ENCODE measurements at regions of chr5 and their contacts with region 1.

Region 1: DNA sequence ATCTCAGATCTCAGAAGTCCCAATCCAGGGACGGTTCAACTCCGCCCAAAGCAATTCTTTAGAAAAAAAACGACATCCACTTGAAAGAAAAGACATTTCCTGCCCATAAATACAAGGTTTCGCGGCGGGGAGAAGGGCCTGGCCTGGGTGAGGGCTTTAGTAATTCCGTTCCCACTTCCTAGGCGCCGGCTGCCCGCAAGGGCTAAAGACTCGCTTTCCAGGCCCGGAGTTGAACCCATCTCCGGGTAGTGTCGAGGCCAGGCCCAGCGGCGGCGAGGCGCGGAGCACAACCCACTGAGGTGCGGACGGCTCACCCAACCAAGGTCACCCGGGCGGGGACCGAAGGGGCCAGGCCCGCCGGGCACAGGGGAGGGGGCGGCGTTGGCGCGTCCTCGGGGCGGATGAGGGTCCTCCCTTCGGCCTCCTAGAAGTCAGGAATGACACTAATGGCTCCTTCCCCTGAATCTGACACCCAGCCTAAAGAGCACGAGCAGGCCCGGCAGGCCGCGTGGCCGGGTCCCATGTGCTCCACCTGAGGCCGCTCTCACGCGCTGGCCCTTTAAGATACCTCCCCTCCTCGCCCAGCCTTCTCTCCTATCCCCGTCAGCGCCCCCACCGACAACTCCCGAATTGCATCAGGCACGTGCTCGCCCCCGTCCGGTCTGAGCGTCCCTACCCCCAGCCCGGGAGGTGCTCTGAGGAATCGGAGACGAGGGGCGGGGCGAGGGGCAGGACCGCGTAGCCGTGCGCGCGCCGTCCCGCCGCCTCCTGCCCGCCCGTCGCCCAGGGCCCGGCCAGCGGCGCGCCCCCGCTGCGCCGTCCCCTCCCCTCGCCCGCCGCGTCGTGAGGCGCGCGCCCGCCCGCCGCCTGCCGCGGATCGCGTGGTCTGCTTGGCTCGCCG is 467 bp upstream of the LARP1 start:
- DNase-seq: peak; percentile 97 to 100 (median 98)

Region 2: DNA sequence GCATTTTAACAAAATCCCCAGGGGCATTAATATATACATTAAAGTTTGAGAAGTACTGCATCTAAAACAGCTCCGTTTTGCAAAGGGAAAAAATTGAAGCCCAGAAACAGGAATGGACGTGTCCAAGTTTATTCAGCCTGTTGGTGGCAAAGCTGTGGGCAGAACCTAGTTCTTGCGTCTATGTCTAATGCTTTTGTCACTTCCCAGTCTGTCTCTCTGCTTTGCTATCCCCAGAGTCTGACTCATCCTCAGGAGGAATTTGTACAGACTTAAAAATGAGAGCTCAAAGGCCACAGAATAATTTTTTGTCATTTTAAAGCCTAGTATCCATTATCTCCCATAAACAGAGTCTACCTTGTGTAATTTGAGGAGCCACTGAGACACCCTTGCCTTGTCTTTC is 1595.1 kb before region 1 on chr5:
- intact Hi-C with region 1: no loop called
- DNase-seq: no peak

Region 3: DNA sequence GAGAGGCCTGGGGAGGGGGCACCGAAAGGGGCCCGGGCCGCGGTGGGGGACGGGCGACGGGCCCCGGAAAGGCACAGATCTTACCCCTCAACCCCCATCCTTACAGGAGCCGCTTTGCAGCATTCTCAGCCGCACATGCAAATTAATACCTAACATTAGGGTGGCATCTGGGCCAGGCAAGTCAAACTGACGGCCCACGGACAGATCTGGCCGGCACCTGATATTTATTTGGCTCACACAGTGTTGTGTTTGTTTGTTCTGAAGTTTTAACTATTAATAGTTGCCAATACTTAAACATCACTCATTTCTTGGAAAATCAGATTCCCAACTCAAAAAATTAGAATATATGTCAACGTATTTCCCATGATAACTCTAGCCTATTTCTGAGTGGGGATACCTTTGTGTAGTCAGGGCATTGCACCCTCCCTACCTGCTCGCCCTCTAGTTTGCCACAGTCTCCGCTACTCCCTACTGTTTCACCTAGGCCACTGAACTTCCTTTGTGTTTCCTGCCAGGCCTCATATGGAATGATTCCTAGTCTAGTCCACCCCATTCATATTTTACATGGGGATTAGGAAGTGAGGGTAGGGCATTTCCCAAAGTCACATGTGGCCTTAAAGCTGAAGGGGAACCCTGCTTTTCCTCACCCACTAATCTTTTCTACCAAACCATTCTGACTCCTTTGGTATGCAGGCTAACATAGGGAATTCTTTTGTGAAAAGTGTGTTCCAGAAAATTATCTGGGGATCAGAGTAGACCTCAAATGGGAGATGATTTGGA is 71.4 kb before region 1 on chr5:
- intact Hi-C with region 1: loop called (anchors 1 kb)
- DNase-seq: no peak

Region 4: GRCh38 chr5:154811653-154812365 is 57.1 kb after region 1 on chr5:
- intact Hi-C with region 1: loop called (anchors 5 kb)
- DNase-seq: peak in 8 of 10 donors; percentile 44 to 92 (median 58)

Region 5: DNA sequence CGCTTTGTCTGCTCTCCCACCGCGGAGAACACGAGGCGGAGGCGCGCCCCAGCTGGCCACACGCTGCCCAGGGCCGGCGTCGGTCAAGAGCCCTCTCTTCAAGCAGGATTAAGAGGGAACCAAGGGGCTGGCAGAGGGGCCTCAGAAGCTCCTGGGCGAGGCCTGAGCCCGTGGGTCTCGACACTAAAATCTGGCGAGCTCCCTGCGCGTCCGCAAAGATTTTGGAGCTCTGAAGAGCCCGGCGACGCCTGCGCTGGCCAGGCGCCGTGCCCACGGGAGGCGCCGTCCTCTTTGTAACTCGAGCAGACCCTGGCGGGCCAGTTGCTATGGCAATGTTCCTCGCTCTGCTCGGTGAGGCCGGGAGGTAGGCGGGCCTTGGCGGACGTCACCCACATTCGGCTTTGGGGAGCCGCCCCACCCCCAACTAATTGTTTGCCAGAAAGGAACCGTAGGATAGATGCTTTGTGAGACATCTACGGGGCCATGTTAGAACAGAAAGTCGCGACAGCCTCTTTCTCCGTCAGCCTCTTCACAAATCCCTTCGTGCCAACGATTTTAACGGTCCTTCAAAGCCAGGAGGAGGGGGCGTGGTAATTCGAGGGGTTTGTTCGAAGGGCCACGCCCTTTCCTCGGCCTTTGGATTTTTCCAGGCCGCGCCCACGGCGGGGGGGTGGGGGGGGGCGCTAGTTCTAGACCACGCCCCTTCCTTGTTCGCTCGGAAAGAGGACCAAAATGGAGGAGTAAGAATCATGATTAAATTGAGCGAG is 103.0 kb after region 1 on chr5:
- intact Hi-C with region 1: loop called (anchors 1 kb)
- DNase-seq: peak; percentile 86 to 99 (median 94)

Region 6: DNA sequence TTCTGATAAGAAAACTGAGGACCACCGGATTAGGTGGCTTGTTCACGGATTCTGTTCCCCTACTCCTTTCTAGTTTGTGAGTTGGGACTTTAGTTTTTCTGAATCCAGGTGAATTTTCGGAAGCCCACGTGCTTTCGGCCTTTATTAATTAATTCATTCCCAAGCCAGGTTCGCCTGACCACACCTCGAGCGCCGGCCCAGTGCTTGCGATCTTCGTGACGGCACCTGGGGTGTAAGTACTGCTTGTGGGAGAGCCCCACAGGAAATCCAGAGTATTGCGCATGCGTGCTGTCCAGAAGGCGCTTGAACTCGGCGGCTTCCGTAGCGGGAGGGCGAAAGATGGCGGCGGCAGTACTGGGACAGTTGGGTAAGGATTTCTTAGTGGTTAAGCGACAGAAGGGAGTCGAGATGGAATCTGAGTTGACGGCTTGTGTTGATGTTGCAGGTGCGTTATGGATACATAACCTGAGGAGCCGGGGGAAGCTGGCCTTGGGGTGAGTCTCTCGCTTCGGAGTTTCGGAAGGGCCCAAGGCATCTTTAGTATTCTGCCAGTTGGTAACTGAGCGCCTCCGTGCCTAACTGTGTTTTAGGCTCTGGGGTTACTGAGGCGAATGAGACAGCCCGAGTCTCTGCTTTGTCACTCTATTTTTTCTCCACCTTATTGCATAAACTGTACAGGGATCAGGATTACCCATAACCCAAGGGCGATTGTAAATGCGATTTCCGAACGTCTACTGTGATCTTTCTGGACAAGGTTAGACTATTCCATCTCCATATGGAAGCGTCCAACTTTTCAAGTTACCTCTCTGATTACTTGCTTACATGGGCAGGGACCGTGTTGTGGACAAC is 186.3 kb after region 1 on chr5 and contains the start of gene MRPL22:
- intact Hi-C with region 1: loop called (anchors 5 kb)
- DNase-seq: peak; percentile 82 to 98 (median 90)